Activated naive CD4-positive, alpha-beta T cell treated with anti-CD3 and anti-CD28 coated beads for 36 hours (primary cell): ENCODE measurements at regions of chr19 and their contacts with region 1.

Region 1: GRCh38 chr19:7903244-7904073 is at the start of gene MAP2K7:
- DNase-seq: peak; percentile 100
- H3K4me3 Mint-ChIP-seq: peak within 1 kb of the TSS; percentile 88
- H3K27ac Mint-ChIP-seq: peak within 1 kb of the TSS; percentile 84
- H3K4me1 Mint-ChIP-seq: peaks cover 24% of the 10 kb centered on the region
- H3K27me3 Mint-ChIP-seq: no peaks in the 10 kb centered on the region
- total RNA-seq, gene MAP2K7: 39.1 to 39.8 TPM

Region 2: DNA sequence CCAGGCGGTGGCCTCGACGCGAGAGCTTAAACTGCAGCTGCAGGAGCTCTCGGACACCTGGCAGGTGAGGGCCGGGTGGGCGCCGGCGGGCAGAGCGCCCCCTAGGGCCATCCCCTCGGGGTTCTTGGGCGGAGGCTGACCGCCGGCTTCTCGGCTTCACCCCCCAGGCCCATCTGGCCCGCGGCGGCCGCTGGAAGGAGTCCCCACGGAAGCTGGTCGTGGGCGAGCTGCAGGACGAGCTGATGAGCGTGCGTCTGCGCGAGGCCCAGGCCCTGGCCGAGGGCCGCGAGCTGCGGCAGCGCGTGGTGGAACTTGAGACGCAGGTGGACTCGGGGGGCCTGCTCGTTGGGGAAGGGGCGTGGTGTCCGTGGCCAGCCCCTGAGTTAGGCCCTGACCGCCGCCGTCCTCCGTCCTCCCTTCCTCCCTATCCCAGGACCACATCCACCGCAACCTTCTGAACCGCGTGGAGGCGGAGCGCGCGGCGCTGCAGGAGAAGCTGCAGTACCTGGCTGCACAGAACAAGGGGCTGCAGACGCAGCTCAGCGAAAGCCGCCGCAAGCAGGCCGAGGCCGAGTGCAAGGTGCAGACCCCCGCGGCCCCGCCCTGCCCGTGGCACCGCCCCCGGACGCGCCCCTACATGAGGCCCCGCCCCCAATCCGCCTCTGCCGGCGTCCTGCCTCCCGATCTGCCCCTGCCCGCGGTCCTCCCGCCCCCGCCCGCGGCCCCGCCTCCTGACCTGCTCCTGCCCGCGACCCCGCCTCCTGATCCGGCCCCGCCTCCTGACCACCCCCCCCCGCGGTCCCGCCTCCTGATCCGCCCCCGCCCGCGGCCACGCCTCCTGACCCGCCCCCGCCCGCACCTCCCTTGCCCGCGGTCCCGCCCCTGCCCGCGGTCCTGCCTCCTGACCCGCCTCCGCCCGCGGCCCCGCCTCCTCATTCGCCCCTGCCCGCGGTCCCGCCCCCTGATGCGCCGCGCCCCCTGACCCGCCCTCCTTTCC is 41.2 kb before region 1 on chr19:
- CTCF ChIA-PET with region 1: no interaction called
- intact Hi-C with region 1: no loop called
- DNase-seq: peak; percentile 87
- H3K4me3 Mint-ChIP-seq: peak overlapping the region; percentile 43
- H3K27ac Mint-ChIP-seq: no peak overlapping the region
- H3K4me1 Mint-ChIP-seq: peaks cover 23% of the 10 kb centered on the region
- H3K27me3 Mint-ChIP-seq: peaks cover 28% of the 10 kb centered on the region

Region 3: DNA sequence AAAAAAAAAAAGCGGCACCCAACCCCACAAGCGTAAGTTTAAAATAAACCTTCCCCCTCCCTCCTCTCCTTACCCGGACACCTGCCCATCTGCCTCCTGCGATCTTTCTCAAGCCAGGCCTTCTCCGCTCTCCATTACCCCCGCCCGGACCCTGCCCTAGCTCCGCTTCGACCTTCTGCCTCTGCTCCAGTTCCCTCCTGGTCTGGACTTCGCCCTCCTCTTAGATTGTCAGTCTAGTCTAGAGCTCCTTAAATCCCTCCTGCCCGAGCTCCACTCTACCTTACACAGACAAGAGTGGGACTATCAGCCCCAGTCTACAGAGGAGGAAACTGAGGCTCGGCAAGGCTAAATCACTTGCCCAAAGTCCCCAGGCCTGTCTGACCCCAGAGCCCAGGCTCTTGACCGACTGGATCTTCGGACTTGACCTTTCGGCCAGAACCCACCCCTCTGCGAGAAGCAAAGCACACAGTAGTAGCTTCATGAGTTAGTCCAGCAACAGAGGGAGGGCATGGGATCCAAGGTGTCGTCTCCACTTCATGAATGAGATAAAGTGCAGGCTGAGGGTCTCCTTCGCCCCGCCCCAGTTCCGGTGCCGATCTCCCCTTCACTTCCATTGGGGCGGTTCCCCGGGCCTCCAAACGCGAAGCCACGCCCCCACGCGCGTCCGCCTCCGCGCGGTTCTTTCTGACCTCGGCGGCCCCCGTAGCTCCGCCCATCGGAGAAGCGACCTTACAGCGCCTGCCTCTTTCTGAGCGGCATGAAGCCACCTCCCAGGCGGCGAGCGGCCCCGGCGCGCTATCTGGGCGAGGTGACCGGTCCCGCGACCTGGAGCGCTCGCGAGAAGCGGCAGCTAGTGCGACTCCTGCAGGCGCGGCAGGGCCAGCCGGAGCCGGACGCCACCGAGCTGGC is 16.4 kb after region 1 on chr19 and contains the start of gene SNAPC2:
- CTCF ChIA-PET with region 1: interaction called, 3 read pairs
- intact Hi-C with region 1: loop called (anchors 1 kb)
- DNase-seq: peak; percentile 96
- H3K4me3 Mint-ChIP-seq: peak within 1 kb of the TSS; percentile 81
- H3K27ac Mint-ChIP-seq: peak within 1 kb of the TSS; percentile 73
- H3K4me1 Mint-ChIP-seq: peaks cover 38% of the 10 kb centered on the region
- H3K27me3 Mint-ChIP-seq: peaks cover 25% of the 10 kb centered on the region
- total RNA-seq, gene SNAPC2: 10.9 to 12.4 TPM